Transverse colon (tissue), 4 donors: ENCODE measurements at regions of chr11 and their contacts with region 1.

Region 1: GRCh38 chr11:48354677-48355076 is 11.6 kb downstream of the OR4C5 start:
- DNase-seq: no peak
- H3K4me3 ChIP-seq: no peak overlapping the region
- H3K27ac ChIP-seq: no peak overlapping the region
- H3K4me1 ChIP-seq: no peaks in the 10 kb centered on the region
- H3K27me3 ChIP-seq: no peaks in the 10 kb centered on the region
- CTCF ChIP-seq: no peak
- EP300 ChIP-seq: no peak
- POLR2A ChIP-seq: no peak

Region 2: GRCh38 chr11:47905481-47906059 is 449.1 kb before region 1 on chr11:
- in situ Hi-C with region 1: no loop called
- intact Hi-C with region 1: no loop called
- DNase-seq: no peak
- H3K4me3 ChIP-seq: no peak overlapping the region
- H3K27ac ChIP-seq: no peak overlapping the region
- H3K4me1 ChIP-seq: no peaks in the 10 kb centered on the region
- H3K27me3 ChIP-seq: no peaks in the 10 kb centered on the region
- CTCF ChIP-seq: no peak
- EP300 ChIP-seq: no peak
- POLR2A ChIP-seq: no peak

Region 3: DNA sequence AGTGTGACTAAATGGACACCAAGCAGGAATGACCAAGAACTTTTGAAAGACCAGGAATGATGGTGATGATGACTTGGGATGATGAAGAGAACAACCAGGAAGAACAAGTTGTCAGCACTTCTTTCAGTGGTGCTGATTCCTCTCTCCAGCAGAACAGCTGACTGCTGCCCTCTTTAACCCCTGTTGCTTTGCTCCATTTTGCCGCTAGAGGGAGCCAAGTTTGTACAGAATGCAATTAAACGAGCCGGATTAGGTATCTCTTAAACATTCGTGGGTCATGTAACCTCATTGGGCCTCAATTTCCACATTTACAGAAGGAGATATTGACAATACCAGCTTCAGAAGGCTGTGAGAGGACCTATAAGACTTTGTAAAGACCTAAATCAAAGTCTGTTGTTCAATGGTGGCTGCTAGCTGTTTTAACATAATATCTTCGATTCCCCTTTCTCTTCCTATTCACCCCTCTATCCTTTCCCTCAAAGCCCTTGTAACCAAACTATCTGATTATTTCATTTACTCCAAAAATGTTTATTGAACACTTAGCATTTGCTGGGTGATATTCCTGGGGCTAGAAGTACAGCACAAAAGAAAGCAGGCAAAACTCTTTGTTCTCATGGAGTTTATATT is 46.8 kb before region 1 on chr11:
- in situ Hi-C with region 1: no loop called
- intact Hi-C with region 1: no loop called
- DNase-seq: peak; percentile 61
- H3K4me3 ChIP-seq: no peak overlapping the region
- H3K27ac ChIP-seq: no peak overlapping the region
- H3K4me1 ChIP-seq: no peaks in the 10 kb centered on the region
- H3K27me3 ChIP-seq: no peaks in the 10 kb centered on the region
- CTCF ChIP-seq: peak; percentile 52 to 80 (median 65)
- EP300 ChIP-seq: no peak
- POLR2A ChIP-seq: no peak

Region 4: DNA sequence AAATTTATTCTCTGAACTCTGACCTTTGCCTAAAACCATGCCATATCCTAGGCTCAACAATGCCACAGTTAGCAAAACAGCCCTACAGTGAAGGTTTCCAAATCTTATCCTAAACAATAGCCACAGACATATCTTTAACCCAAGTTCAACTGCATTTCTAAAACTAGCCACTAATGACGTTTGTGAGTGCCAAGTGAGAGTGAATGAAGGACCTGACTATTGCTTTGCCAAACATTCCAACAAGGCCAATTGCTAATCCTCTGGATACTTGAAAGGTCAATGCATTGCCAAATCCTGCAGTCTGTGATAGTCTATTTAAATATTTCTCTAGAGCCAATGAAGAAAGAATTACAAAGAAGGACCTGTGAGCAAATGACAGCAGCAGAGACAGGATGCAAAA is 1675.5 kb after region 1 on chr11:
- in situ Hi-C with region 1: loop called in 1 of 4 experiments (anchors 5 kb)
- intact Hi-C with region 1: no loop called
- DNase-seq: no peak
- H3K4me3 ChIP-seq: no peak overlapping the region
- H3K27ac ChIP-seq: no peak overlapping the region
- H3K4me1 ChIP-seq: no peaks in the 10 kb centered on the region
- H3K27me3 ChIP-seq: no peaks in the 10 kb centered on the region
- CTCF ChIP-seq: no peak
- EP300 ChIP-seq: no peak
- POLR2A ChIP-seq: no peak